ENCODE measurements at regions of chr16 and their contacts with region 1.

Region 1: DNA sequence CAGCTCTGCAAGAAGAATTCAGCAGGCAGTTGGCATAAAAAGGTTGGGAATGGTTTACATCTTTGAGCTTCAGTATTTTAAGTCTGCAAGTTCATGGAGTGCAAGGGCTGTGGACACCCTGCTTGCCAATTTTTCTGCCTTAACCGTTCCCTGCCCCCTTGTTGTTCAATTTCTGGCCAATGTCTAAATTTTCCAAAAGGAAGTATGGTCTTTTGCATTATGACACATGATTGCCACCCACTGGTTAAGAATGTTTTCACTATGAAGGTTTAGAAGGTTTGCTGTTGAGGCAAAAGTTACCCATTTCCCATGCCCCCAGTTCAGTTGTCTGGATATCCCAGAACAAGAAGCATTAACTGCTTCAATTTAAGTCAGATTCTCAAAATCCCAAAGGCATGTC is 441.9 kb downstream of the CDH13 start:
- DNase-seq: no peak
- H3K4me3 ChIP-seq: no peak overlapping the region
- H3K27ac ChIP-seq: peak overlapping the region; percentile 47 to 55
- H3K4me1 ChIP-seq: peaks cover 3 to 14% of the 10 kb centered on the region in 2 donors
- H3K27me3 ChIP-seq: no peaks in the 10 kb centered on the region
- CTCF ChIP-seq: peak in 2 of 3 experiments; percentile 13 to 47

Region 2: GRCh38 chr16:82603784-82604411 is 464.8 kb before region 1 on chr16:
- intact Hi-C with region 1: loop called (anchors 2 kb)
- DNase-seq: peak in 1 of 2 donors; percentile 80
- H3K4me3 ChIP-seq: no peak overlapping the region
- H3K27ac ChIP-seq: no peak overlapping the region
- H3K4me1 ChIP-seq: no peaks in the 10 kb centered on the region
- H3K27me3 ChIP-seq: no peaks in the 10 kb centered on the region
- CTCF ChIP-seq: peak; percentile 68 to 83 (median 83)

Region 3: DNA sequence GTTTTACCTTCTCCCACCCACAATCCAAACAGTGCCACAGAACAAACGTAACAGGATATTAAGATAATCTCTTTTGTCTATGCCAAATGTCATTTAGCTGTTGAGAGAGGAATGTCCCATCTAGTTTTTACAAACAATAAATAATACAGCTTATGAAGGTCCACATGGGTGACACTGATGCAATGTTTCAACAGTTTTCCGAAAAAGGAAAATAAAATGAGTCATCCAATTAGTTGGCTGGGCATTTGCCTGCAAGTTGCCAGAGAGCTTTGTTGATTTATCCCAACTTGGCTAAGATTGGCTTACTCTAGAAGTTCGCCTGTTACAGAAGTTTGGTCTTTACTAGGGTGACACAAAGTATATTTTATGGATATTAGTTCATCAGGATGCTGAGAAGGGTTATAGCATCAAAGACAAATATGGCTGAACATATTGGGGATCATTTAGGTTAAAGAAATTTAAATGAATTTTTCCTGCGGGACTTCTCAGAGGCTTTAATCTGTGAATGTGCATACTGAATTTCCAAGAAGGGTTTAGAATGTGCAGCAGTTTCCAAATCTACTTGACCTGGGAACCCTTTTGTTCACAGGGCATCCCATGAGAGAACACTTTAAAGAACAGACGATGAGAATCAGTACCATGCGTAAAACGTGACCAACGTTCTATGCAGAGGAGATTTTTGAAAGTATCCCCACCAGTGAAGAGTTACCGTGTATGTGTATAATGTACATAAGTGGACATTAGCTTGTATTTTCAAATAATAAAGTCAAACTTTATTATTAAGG is 368.8 kb before region 1 on chr16:
- intact Hi-C with region 1: loop called (anchors 5 kb)
- DNase-seq: peak in 1 of 2 donors; percentile 73
- H3K4me3 ChIP-seq: no peak overlapping the region
- H3K27ac ChIP-seq: peak overlapping the region; percentile 88 to 89
- H3K4me1 ChIP-seq: peaks cover 11 to 47% of the 10 kb centered on the region in 2 donors
- H3K27me3 ChIP-seq: no peaks in the 10 kb centered on the region
- CTCF ChIP-seq: no peak

Region 4: GRCh38 chr16:82995924-82996441 is 72.7 kb before region 1 on chr16:
- intact Hi-C with region 1: loop called (anchors 5 kb)
- DNase-seq: peak in 1 of 2 donors; percentile 64
- H3K4me3 ChIP-seq: peak overlapping the region in 1 of 2 donors; percentile 29
- H3K27ac ChIP-seq: peak overlapping the region; percentile 62 to 82
- H3K4me1 ChIP-seq: peaks cover 3 to 12% of the 10 kb centered on the region in 2 donors
- H3K27me3 ChIP-seq: no peaks in the 10 kb centered on the region
- CTCF ChIP-seq: no peak

Region 5: GRCh38 chr16:83305092-83305491 is 236.4 kb after region 1 on chr16:
- intact Hi-C with region 1: no loop called
- DNase-seq: no peak
- H3K4me3 ChIP-seq: no peak overlapping the region
- H3K27ac ChIP-seq: no peak overlapping the region
- H3K4me1 ChIP-seq: peaks cover 0 to 9% of the 10 kb centered on the region in 2 donors
- H3K27me3 ChIP-seq: no peaks in the 10 kb centered on the region
- CTCF ChIP-seq: no peak

Region 6: GRCh38 chr16:83441517-83441916 is 372.8 kb after region 1 on chr16:
- intact Hi-C with region 1: loop called (anchors 10 kb)
- DNase-seq: no peak
- H3K4me3 ChIP-seq: no peak overlapping the region
- H3K27ac ChIP-seq: no peak overlapping the region
- H3K4me1 ChIP-seq: no peaks in the 10 kb centered on the region
- H3K27me3 ChIP-seq: no peaks in the 10 kb centered on the region
- CTCF ChIP-seq: peak in 1 of 3 experiments; percentile 16